Right ventricle myocardium inferior (tissue), 1 donor: ENCODE measurements at regions of chr2 and their contacts with region 1.

Region 1: DNA sequence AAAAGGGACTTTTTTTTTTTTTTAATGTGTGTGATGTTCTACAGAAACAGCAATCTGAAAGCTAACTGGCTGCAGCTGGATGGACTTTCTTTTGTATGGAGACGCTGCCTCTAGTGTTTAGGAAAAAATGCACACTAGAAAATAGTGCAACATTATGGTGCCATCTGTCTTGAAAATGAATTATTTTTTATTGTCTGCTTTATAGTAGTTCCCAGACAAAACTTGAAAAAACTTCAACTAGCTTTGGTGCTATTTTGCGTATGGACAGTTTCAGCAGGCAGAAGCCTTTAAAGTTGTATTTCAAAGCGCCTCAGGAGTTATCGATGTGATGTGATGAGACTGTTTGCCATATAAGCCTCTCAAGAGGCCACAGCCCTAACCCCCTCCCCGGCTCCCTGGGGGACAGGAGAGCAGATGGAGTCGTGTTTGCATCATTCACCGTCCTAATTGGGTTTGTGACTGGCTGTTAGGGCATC is 86.9 kb downstream of the LTBP1 start:
- DNase-seq: no peak
- ATAC-seq: peak; percentile 72

Region 2: GRCh38 chr2:32918774-32919173 is 114.9 kb before region 1 on chr2:
- intact Hi-C with region 1: no loop called
- DNase-seq: no peak
- ATAC-seq: no peak

Region 3: GRCh38 chr2:33272001-33272400 is 238.4 kb after region 1 on chr2:
- intact Hi-C with region 1: loop called (anchors 5 kb)
- DNase-seq: no peak
- ATAC-seq: no peak

Region 4: GRCh38 chr2:33372940-33373553 is 339.4 kb after region 1 on chr2:
- intact Hi-C with region 1: loop called (anchors 10 kb)
- DNase-seq: no peak
- ATAC-seq: no peak

Region 5: GRCh38 chr2:33441235-33441810 is 407.7 kb after region 1 on chr2:
- intact Hi-C with region 1: loop called (anchors 5 kb)
- DNase-seq: no peak
- ATAC-seq: peak; percentile 81

Region 6: GRCh38 chr2:33583194-33583938 is 549.7 kb after region 1 on chr2:
- intact Hi-C with region 1: loop called (anchors 10 kb)
- DNase-seq: no peak
- ATAC-seq: no peak